AG04450 (cell line): ENCODE measurements at regions of chr7 and their contacts with region 1.

Region 1: DNA sequence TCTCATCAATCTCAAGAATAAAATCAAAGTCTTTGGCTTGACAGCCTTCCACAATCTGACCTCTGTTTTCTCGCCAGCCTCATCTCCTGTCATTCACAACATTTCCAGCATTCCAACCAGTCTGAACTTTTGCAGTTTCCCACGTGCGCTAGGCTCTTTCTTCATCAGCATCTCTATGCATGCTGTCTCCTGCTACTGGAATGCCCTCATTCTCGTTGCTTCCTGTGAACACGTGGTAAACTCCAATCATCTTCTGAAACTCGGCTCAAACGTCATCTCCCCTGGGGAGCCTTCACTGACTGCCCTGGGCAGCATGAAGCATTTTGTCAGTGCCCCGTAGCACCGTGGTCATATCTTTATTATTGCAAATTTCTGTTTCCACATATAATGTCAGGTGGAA is 12.2 kb upstream of the RSBN1L start:
- DNase-seq: no peak
- H3K4me3 ChIP-seq: no peak overlapping the region
- H3K27ac ChIP-seq: no peak overlapping the region
- H3K27me3 ChIP-seq: no peaks in the 10 kb centered on the region
- CTCF ChIP-seq: no peak

Region 2: DNA sequence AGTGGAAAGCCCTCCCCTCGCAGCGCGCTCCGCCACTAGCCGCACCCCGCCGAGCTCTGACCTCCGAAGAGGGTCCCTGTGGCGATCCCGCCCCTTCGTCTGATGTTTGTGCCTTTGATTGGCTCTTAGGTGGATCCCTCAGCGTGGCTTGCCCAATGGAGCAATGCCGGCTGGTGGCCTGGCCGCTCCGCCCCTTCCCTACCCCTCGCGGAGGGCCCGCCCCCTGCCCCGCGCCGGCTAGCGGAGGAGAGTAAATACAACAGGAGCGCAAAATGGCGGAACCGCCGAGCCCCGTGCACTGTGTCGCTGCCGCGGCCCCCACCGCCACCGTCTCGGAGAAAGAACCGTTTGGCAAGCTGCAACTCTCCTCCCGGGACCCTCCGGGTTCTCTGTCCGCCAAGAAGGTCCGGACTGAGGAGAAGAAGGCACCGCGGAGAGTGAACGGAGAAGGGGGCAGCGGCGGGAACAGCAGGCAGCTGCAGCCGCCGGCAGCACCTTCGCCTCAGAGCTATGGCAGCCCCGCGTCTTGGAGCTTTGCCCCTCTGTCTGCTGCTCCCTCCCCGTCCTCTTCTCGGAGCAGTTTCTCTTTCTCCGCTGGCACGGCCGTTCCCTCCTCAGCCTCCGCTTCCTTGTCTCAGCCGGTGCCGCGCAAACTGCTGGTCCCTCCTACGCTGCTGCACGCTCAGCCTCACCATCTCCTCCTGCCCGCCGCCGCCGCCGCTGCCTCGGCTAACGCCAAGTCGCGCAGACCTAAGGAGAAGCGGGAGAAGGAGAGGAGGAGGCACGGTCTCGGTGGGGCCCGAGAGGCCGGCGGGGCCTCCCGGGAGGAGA is 12.4 kb after region 1 on chr7 and contains the start of gene RSBN1L:
- CTCF ChIA-PET with region 1: no interaction called
- POLR2A ChIA-PET with region 1: interaction called, 13 read pairs
- DNase-seq: peak; percentile 92
- H3K4me3 ChIP-seq: peak within 1 kb of the TSS; percentile 94
- H3K27ac ChIP-seq: peak within 1 kb of the TSS; percentile 78
- H3K27me3 ChIP-seq: no peaks in the 10 kb centered on the region
- CTCF ChIP-seq: peak; percentile 42
- polyA plus RNA-seq, gene RSBN1L: 9.3 and 14.0 TPM in 2 replicates

Region 3: DNA sequence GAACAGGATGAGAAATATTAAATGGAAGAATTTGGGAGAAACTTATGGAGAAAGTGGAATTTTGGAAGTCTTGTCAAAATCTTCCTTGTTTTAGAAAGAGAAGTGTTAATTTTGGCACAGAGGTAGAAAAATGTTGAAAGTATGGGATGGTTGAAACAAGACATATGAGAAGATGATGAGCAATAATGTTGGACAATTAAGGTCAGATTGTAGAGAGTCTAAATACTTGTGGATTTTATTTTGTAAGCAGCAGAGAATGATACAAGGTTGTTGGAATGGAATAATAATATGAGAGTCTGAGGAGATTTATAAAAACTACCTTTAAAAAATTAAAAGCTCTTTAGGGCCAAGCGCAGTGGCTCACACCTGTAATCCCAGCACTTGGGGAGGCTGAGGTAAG is 149.1 kb after region 1 on chr7:
- CTCF ChIA-PET with region 1: no interaction called
- POLR2A ChIA-PET with region 1: no interaction called
- DNase-seq: no peak
- H3K4me3 ChIP-seq: no peak overlapping the region
- H3K27ac ChIP-seq: no peak overlapping the region
- H3K27me3 ChIP-seq: no peaks in the 10 kb centered on the region
- CTCF ChIP-seq: no peak

Region 4: GRCh38 chr7:78399033-78399769 is 715.2 kb after region 1 on chr7:
- CTCF ChIA-PET with region 1: interaction called, 14 read pairs
- POLR2A ChIA-PET with region 1: no interaction called
- DNase-seq: no peak
- H3K4me3 ChIP-seq: no peak overlapping the region
- H3K27ac ChIP-seq: no peak overlapping the region
- H3K27me3 ChIP-seq: no peaks in the 10 kb centered on the region
- CTCF ChIP-seq: no peak